ENCODE measurements at regions of chr15 and their contacts with region 1.

Region 1: DNA sequence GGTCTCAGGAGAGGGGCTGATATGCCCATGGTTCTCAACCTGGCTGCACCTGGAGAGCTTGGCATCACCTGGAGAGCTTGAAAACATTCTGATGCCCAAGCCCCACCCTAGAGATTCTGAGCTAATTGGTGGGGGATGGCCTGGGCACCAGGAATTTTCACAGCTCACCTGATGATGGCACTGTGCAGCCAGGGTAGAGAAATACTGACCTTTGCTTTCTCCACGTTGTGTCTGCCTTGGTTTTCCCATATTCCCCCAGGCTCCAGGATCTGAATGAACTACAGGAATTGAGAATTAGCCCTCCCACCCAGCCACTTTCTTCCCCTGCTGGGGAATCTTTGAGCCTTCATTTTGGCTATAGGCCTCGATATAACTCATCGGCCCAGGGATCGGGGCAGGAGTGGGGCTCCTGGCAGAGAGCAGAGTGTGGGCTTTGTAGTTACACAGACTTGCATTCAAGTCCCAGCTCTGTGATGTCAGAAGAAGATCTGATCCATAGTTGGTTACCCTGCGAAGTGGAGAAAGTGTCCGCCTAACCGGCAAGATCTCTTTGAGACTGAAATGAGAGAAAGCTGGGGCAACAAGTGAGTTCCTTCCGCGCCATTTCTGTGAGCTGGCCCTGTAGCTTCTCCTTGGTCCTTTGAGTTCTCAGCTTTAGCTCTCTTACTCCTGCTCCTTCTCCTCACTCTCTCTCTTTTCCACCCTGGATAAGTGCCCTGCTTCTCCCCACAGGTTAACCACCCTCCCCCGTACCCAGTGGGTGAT is 33.1 kb upstream of the UBE2Q2 start:
- DNase-seq: no peak
- ATAC-seq: peak; percentile 71; the same call in 1 of the 2 replicates
- H3K4me3 ChIP-seq: no peak overlapping the region
- H3K27ac ChIP-seq: no peak overlapping the region
- H3K4me1 ChIP-seq: no peaks in the 10 kb centered on the region
- H3K27me3 ChIP-seq: peaks cover 16% of the 10 kb centered on the region
- CTCF ChIP-seq: peak; percentile 45
- POLR2A ChIP-seq: no peak
- RAD21 ChIP-seq: peak; percentile 58

Region 2: GRCh38 chr15:75738647-75739331 is 71.4 kb before region 1 on chr15:
- CTCF ChIA-PET with region 1: no interaction called
- POLR2A ChIA-PET with region 1: no interaction called
- dilution Hi-C with region 1: no loop called
- in situ Hi-C with region 1: no loop called
- intact Hi-C with region 1: no loop called
- DNase-seq: peak; percentile 87
- ATAC-seq: peak; percentile 100
- H3K4me3 ChIP-seq: peak overlapping the region; percentile 60
- H3K27ac ChIP-seq: no peak overlapping the region; the same call in 1 of the 2 replicates
- H3K4me1 ChIP-seq: 0 out of 2 replicates have a peak, but pooled peaks cover 1% of the 10 kb centered on the region
- H3K27me3 ChIP-seq: peaks cover 8% of the 10 kb centered on the region
- CTCF ChIP-seq: no peak
- POLR2A ChIP-seq: no peak
- RAD21 ChIP-seq: no peak

Region 3: DNA sequence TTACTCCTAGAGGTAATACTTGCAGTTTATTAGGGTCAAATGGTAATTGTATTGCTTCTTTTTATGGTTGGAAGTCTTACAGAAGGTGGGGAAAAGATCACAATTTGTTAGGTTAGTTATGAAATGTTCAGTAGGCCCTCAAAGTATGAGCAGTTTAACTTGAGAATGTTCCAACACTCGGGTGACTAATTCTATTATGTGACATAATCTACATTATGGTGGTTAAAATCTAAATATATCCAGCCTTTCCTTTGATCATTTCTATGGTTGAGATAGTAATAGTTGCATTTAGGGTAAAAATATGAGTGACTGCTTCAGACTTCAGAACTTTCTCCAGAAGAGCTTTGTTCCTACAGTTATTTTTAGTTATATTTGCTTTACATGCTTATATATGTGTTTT is 73.9 kb after region 1 on chr15:
- CTCF ChIA-PET with region 1: no interaction called
- POLR2A ChIA-PET with region 1: no interaction called
- dilution Hi-C with region 1: no loop called
- in situ Hi-C with region 1: no loop called
- intact Hi-C with region 1: no loop called
- DNase-seq: peak; percentile 67
- ATAC-seq: peak; percentile 35
- H3K4me3 ChIP-seq: no peak overlapping the region
- H3K27ac ChIP-seq: no peak overlapping the region
- H3K4me1 ChIP-seq: peaks cover 3% of the 10 kb centered on the region
- H3K27me3 ChIP-seq: no peaks in the 10 kb centered on the region
- CTCF ChIP-seq: no peak
- POLR2A ChIP-seq: no peak
- RAD21 ChIP-seq: no peak

Region 4: GRCh38 chr15:75921729-75922703 is 111.8 kb after region 1 on chr15:
- CTCF ChIA-PET with region 1: interaction called, 3 read pairs
- POLR2A ChIA-PET with region 1: no interaction called
- dilution Hi-C with region 1: no loop called
- in situ Hi-C with region 1: no loop called
- intact Hi-C with region 1: loop called (anchors 2 kb)
- DNase-seq: peak; percentile 83
- ATAC-seq: peak; percentile 64
- H3K4me3 ChIP-seq: no peak overlapping the region
- H3K27ac ChIP-seq: no peak overlapping the region
- H3K4me1 ChIP-seq: peaks cover 4% of the 10 kb centered on the region
- H3K27me3 ChIP-seq: no peaks in the 10 kb centered on the region
- CTCF ChIP-seq: peak; percentile 58
- POLR2A ChIP-seq: no peak
- RAD21 ChIP-seq: peak; percentile 70